Gastrocnemius medialis (tissue), 4 donors: ENCODE measurements at regions of chr19 and their contacts with region 1.

Region 1: GRCh38 chr19:40662921-40663694 is 27.3 kb downstream of the NUMBL start:
- DNase-seq: peak; percentile 84 to 85
- ATAC-seq: peak; percentile 88 to 89
- H3K4me3 ChIP-seq: peak overlapping the region; percentile 80 to 96 (median 86)
- H3K27ac ChIP-seq: peak overlapping the region; percentile 87 to 94 (median 92)
- H3K4me1 ChIP-seq: peaks cover 6 to 11% of the 10 kb centered on the region in 2 donors
- H3K27me3 ChIP-seq: no peaks in the 10 kb centered on the region
- CTCF ChIP-seq: peak; percentile 95 to 99 (median 99)
- POLR2A ChIP-seq: no peak

Region 2: GRCh38 chr19:40744554-40745401 is 81.7 kb after region 1 on chr19:
- in situ Hi-C with region 1: no loop called
- intact Hi-C with region 1: no loop called
- DNase-seq: no peak
- ATAC-seq: no peak
- H3K4me3 ChIP-seq: no peak overlapping the region
- H3K27ac ChIP-seq: peak overlapping the region in 1 of 4 donors; percentile 22
- H3K4me1 ChIP-seq: peaks cover 25 to 27% of the 10 kb centered on the region in 2 donors
- H3K27me3 ChIP-seq: no peaks in the 10 kb centered on the region
- CTCF ChIP-seq: peak in 2 of 5 experiments; percentile 14 to 20
- POLR2A ChIP-seq: no peak

Region 3: DNA sequence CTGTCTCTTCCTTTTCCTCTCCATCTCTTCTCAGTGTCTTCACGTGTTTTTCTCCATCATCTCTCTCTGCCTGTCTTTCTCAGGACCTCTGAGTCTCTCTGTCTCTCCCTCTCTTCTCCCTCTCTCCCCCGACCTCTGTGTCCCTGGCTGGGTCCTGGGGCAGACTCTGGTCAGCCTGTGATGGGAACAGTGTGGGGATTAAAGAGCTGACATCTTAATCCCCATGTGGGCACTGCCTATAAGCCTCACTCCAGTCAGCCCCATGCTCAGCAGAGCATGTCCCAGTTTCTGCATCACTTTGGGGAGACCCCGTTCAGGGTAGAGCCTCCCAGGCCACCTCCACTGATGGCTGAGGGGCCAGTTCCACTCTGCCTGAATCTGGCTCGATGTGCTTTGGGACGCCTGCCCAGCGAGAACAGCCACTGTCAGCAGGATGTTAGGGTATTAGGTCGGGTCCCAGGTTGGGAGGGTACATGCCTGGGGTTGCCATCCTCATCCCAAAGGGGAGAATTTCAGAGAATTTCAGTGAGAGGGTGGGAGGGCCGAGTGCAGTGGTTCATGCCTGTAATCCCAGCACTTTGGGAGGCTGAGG is 152.2 kb after region 1 on chr19:
- in situ Hi-C with region 1: loop called (anchors 5 to 10 kb)
- intact Hi-C with region 1: loop called (anchors 1 kb)
- DNase-seq: no peak
- ATAC-seq: no peak
- H3K4me3 ChIP-seq: no peak overlapping the region
- H3K27ac ChIP-seq: no peak overlapping the region
- H3K4me1 ChIP-seq: peaks cover 25 to 28% of the 10 kb centered on the region in 2 donors
- H3K27me3 ChIP-seq: no peaks in the 10 kb centered on the region
- CTCF ChIP-seq: no peak
- POLR2A ChIP-seq: no peak

Region 4: GRCh38 chr19:40822161-40822560 is 159.1 kb after region 1 on chr19:
- in situ Hi-C with region 1: loop called (anchors 5 to 10 kb)
- intact Hi-C with region 1: loop called (anchors 1 kb)
- DNase-seq: no peak
- ATAC-seq: no peak
- H3K4me3 ChIP-seq: no peak overlapping the region
- H3K27ac ChIP-seq: no peak overlapping the region
- H3K4me1 ChIP-seq: peaks cover 15 to 23% of the 10 kb centered on the region in 2 donors
- H3K27me3 ChIP-seq: no peaks in the 10 kb centered on the region
- CTCF ChIP-seq: no peak
- POLR2A ChIP-seq: no peak

Region 5: DNA sequence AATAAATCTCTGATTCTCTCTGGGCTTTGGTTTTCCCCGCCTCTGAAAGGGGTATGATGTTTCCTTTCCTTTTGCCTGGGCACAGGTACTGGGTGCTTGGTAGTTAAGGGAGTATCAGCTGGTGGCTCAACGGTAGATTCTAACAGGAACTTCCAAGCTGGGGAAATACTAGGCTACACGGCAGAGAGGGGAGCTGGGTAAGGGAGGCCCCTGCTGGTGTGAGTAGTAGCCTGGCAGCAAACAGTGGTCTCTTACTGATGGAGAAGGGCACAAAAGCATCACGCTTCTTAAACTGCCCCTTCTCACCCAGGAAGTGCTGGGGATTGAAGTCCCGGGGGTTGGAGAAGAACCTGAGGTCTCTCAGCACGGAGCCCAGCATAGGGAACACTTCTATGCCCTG is 245.9 kb after region 1 on chr19:
- in situ Hi-C with region 1: loop called in 1 of 4 experiments (anchors 5 kb)
- intact Hi-C with region 1: no loop called
- DNase-seq: no peak
- ATAC-seq: no peak
- H3K4me3 ChIP-seq: peak overlapping the region in 1 of 4 donors; percentile 23
- H3K27ac ChIP-seq: no peak overlapping the region
- H3K4me1 ChIP-seq: no peaks in the 10 kb centered on the region
- H3K27me3 ChIP-seq: peaks cover 0 to 12% (median 6%) of the 10 kb centered on the region in 3 donors
- CTCF ChIP-seq: peak in 1 of 5 experiments; percentile 41
- POLR2A ChIP-seq: no peak

Region 6: DNA sequence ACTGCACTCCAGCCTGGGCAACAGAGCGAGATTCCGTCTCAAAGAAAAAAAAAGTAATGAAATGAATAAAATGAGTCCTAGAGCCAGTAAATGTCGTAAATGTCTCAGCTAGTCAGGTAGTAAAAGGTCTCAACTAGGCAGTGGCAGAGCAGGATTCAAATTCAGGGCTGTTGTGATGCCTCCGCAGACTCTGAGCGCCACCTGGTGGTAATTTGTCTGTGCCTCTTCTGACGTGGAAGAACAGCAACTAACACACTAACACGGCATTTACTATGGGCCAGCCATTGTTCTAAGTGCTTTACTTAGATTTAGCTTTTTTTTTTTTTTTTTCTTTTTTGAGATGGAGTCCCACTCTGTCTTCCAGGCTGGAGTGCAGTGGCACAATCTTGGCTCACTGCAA is 481.3 kb after region 1 on chr19:
- in situ Hi-C with region 1: loop called (anchors 10 to 25 kb)
- intact Hi-C with region 1: loop called (anchors 5 kb)
- DNase-seq: peak; percentile 34 to 41
- ATAC-seq: no peak
- H3K4me3 ChIP-seq: no peak overlapping the region
- H3K27ac ChIP-seq: no peak overlapping the region
- H3K4me1 ChIP-seq: no peaks in the 10 kb centered on the region
- H3K27me3 ChIP-seq: peaks cover 0 to 5% (median 0%) of the 10 kb centered on the region in 3 donors
- CTCF ChIP-seq: peak in 4 of 5 experiments; percentile 51 to 64 (median 58)
- POLR2A ChIP-seq: no peak